CD4-positive, alpha-beta T cell (primary cell): ENCODE measurements at regions of chr4 and their contacts with region 1.

Region 1: DNA sequence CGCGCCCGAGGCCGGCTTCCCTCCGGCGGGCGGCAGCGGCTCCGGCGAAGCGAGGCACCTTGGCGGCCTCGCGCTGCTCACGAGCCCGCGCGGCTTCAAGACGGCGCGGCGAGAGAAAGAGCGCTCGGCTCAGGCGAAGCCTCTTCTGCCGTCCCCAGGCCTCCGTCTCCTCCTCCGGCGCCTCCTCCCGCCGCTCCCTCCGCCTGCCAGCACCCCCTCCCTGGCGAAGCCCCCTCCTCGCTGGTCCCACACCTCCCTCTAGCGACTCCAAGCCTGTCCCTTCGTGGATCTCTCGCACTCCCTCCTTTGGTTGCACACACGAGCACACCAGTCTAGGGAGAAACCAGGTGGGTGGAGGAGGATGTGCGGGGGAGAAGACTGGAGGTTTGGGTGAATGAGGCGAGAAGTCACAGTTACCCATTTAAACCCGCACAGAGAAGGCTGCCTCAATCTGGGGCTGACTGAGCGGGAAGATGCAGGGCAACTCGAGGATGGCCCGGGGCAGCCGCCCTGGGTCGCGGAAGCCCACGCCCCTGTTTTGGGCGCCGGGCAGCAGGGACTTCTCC is at the start of gene CAMK2D:
- DNase-seq: peak; percentile 65 to 95 (median 79)
- ATAC-seq: peak; percentile 65
- H3K4me3 ChIP-seq: peak within 1 kb of the TSS; percentile 87
- H3K4me3 Mint-ChIP-seq: peak within 1 kb of the TSS; percentile 95
- H3K27ac ChIP-seq: peak within 1 kb of the TSS; percentile 94 to 96
- H3K27ac Mint-ChIP-seq: peak within 1 kb of the TSS; percentile 95
- H3K4me1 ChIP-seq: peaks cover 7% of the 10 kb centered on the region
- H3K4me1 Mint-ChIP-seq: peaks cover 37% of the 10 kb centered on the region
- H3K27me3 ChIP-seq: no peaks in the 10 kb centered on the region
- H3K27me3 Mint-ChIP-seq: no peaks in the 10 kb centered on the region
- CTCF ChIP-seq: peak; percentile 37
- total RNA-seq, gene CAMK2D: 29.9 to 32.9 TPM

Region 2: GRCh38 chr4:113636438-113636818 is 125.3 kb before region 1 on chr4:
- CTCF ChIA-PET with region 1: no interaction called
- POLR2A ChIA-PET with region 1: interaction called, 4 read pairs
- intact Hi-C with region 1: loop called (anchors 2 to 5 kb)
- DNase-seq: peak in 6 of 14 experiments; percentile 11 to 75 (median 43)
- ATAC-seq: peak; percentile 76
- H3K4me3 ChIP-seq: no peak overlapping the region
- H3K4me3 Mint-ChIP-seq: peak overlapping the region; percentile 39
- H3K27ac ChIP-seq: peak overlapping the region in 1 of 2 donors; percentile 33
- H3K27ac Mint-ChIP-seq: peak overlapping the region; percentile 80
- H3K4me1 ChIP-seq: peaks cover 22% of the 10 kb centered on the region
- H3K4me1 Mint-ChIP-seq: peaks cover 55% of the 10 kb centered on the region
- H3K27me3 ChIP-seq: no peaks in the 10 kb centered on the region
- H3K27me3 Mint-ChIP-seq: no peaks in the 10 kb centered on the region
- CTCF ChIP-seq: peak; percentile 28

Region 3: GRCh38 chr4:113684534-113685091 is 77.1 kb before region 1 on chr4:
- CTCF ChIA-PET with region 1: no interaction called
- POLR2A ChIA-PET with region 1: interaction called, 6 read pairs
- intact Hi-C with region 1: loop called (anchors 1 to 5 kb)
- DNase-seq: peak in 2 of 14 experiments; percentile 17 to 32
- ATAC-seq: no peak
- H3K4me3 ChIP-seq: no peak overlapping the region
- H3K4me3 Mint-ChIP-seq: peak overlapping the region; percentile 23
- H3K27ac ChIP-seq: peak overlapping the region; percentile 10
- H3K27ac Mint-ChIP-seq: peak overlapping the region; percentile 87
- H3K4me1 ChIP-seq: peaks cover 14% of the 10 kb centered on the region
- H3K4me1 Mint-ChIP-seq: peaks cover 53% of the 10 kb centered on the region
- H3K27me3 ChIP-seq: no peaks in the 10 kb centered on the region
- H3K27me3 Mint-ChIP-seq: no peaks in the 10 kb centered on the region
- CTCF ChIP-seq: no peak

Region 4: DNA sequence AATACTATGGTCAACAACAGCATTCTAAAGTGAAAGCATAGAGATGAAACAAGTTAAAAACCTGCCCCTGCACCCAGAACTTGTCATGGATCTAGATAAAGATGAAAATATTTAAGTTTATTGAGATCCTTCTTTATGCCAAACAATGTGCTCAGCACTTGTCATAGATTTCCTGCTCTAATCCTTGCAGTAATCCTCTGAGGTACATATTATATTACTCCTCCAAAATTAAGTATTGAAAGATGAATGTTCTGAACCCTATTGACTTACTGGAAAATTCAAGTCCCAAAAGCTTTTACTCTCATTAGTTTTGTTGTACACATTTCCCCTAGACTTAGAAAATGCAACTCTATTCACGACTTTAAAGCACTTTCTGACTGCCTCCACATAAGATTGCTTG is 35.7 kb before region 1 on chr4:
- CTCF ChIA-PET with region 1: no interaction called
- POLR2A ChIA-PET with region 1: no interaction called
- intact Hi-C with region 1: loop called in 1 of 2 experiments (anchors 5 kb)
- DNase-seq: no peak
- ATAC-seq: no peak
- H3K4me3 ChIP-seq: no peak overlapping the region
- H3K4me3 Mint-ChIP-seq: no peak overlapping the region
- H3K27ac ChIP-seq: no peak overlapping the region
- H3K27ac Mint-ChIP-seq: no peak overlapping the region
- H3K4me1 ChIP-seq: peaks cover 5% of the 10 kb centered on the region
- H3K4me1 Mint-ChIP-seq: peaks cover 68% of the 10 kb centered on the region
- H3K27me3 ChIP-seq: no peaks in the 10 kb centered on the region
- H3K27me3 Mint-ChIP-seq: no peaks in the 10 kb centered on the region
- CTCF ChIP-seq: no peak

Region 5: DNA sequence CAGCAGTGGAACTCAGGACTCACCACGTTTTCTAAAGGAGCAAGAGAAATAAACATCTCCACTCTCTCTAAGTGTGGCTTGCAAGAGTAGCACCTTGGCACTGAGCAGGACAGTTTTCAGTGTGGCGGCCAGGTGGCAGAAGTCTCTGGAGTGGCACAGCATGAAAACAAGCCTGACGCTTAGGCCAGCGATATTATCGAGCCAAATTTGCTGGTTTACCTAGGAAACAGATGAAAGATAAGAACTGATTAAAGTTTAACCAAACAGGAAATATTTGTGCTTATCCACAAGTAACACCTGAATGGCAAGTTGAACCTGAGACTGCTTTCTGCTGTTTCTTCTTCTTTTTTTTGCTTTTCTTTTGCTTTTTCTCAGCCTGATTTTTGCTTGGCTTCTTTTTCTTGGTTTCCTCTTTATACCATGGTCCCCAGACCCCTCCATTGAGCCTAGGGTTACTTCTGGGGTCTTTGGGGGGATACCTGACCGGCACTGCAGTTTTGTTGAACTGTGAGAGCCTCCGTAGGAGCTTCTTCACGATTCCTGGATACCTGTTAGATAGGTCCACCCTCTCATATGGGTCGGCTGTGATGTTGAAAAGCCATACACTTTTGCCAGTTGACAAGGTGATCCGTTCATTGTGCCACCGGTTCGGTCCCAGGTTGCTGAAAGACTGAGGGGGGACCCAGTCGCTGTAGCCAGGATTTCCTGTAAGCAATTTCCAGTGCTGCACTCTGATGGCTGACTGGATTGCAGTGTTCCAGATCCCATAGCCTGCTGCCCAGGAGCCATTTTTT is 140.5 kb after region 1 on chr4:
- CTCF ChIA-PET with region 1: no interaction called
- POLR2A ChIA-PET with region 1: interaction called, 4 read pairs
- intact Hi-C with region 1: loop called (anchors 2 to 5 kb)
- DNase-seq: peak; percentile 55 to 91 (median 65)
- ATAC-seq: peak; percentile 78
- H3K4me3 ChIP-seq: peak overlapping the region; percentile 19
- H3K4me3 Mint-ChIP-seq: peak overlapping the region; percentile 26
- H3K27ac ChIP-seq: peak overlapping the region; percentile 68 to 70
- H3K27ac Mint-ChIP-seq: peak overlapping the region; percentile 85
- H3K4me1 ChIP-seq: peaks cover 42% of the 10 kb centered on the region
- H3K4me1 Mint-ChIP-seq: peaks cover 83% of the 10 kb centered on the region
- H3K27me3 ChIP-seq: no peaks in the 10 kb centered on the region
- H3K27me3 Mint-ChIP-seq: no peaks in the 10 kb centered on the region
- CTCF ChIP-seq: peak; percentile 71

Region 6: DNA sequence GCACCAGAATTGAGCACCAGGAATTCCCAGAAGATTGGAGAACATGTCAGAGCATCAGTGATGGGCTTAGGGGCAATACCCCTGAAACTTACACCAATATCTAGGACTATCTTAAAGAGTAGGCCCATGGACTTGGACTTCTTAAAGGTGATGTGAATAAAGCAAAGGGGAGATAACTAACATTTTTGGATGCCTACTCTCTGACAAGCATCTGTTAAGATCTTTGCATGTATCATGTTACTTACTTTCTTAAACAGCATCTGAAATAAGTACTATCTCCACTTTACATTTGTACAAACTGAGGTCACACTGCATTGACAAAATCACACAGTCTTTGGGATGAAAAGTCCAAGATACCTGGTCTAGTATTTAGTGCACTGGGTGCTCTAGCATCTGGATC is 476.3 kb after region 1 on chr4:
- CTCF ChIA-PET with region 1: no interaction called
- POLR2A ChIA-PET with region 1: no interaction called
- intact Hi-C with region 1: no loop called
- DNase-seq: no peak
- ATAC-seq: no peak
- H3K4me3 ChIP-seq: no peak overlapping the region
- H3K4me3 Mint-ChIP-seq: no peak overlapping the region
- H3K27ac ChIP-seq: no peak overlapping the region
- H3K27ac Mint-ChIP-seq: no peak overlapping the region
- H3K4me1 ChIP-seq: no peaks in the 10 kb centered on the region
- H3K4me1 Mint-ChIP-seq: no peaks in the 10 kb centered on the region
- H3K27me3 ChIP-seq: no peaks in the 10 kb centered on the region
- H3K27me3 Mint-ChIP-seq: no peaks in the 10 kb centered on the region
- CTCF ChIP-seq: no peak